Dorsolateral prefrontal cortex (tissue), 120 donors: ENCODE measurements at regions of chrX and their contacts with region 1.

Region 1: GRCh38 chrX:45322382-45322781 is 121.7 kb upstream of the DIPK2B start:
- DNase-seq: peak in 3 of 10 donors; percentile 5 to 30 (median 26)
- H3K4me3 ChIP-seq: no peak overlapping the region
- H3K27ac ChIP-seq: no peak overlapping the region
- H3K27me3 ChIP-seq: peaks cover 0 to 83% (median 23%) of the 10 kb centered on the region in 45 donors
- CTCF ChIP-seq: peak in 54 of 56 donors; percentile 25 to 75 (median 53)

Region 2: DNA sequence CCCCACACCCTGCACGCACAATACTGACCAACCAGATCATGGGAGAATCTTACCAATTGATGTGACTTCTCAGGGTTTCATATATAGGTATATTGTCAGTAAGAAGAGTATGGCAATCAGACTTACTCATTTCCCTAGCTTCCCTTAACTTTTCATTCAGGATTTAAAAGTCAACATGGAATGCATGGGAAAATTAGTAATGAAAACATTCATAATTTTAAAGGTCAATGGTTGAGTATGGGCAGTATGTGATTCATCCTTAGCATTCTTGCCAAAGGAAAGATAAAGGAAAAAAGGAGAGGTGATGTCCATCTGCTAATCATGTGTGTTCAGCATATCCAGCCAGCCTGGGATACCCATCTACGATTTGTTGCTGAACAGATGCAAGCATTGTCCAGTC is 125.7 kb before region 1 on chrX:
- intact Hi-C with region 1: loop called in 1 of 2 experiments (anchors 5 kb)
- DNase-seq: no peak
- H3K4me3 ChIP-seq: no peak overlapping the region
- H3K27ac ChIP-seq: no peak overlapping the region
- H3K27me3 ChIP-seq: peaks cover 0 to 84% (median 15%) of the 10 kb centered on the region in 45 donors
- CTCF ChIP-seq: no peak

Region 3: GRCh38 chrX:46408553-46409407 is 1086.4 kb after region 1 on chrX:
- intact Hi-C with region 1: loop called (anchors 10 kb)
- DNase-seq: peak; percentile 62 to 86 (median 78)
- H3K4me3 ChIP-seq: no peak overlapping the region
- H3K27ac ChIP-seq: peak overlapping the region in 10 of 59 donors; percentile 2 to 44 (median 28)
- H3K27me3 ChIP-seq: peaks cover 0 to 29% (median 5%) of the 10 kb centered on the region in 45 donors
- CTCF ChIP-seq: peak; percentile 61 to 98 (median 90)